ENCODE measurements at regions of chr19 and their contacts with region 1.

Region 1: GRCh38 chr19:5557691-5558090 is 10.1 kb downstream of the TINCR start:
- DNase-seq: peak; percentile 81
- H3K4me3 ChIP-seq: peak overlapping the region; percentile 3 to 32 (median 10)
- H3K27ac ChIP-seq: peak overlapping the region; percentile 84
- H3K4me1 ChIP-seq: peaks cover 17% of the 10 kb centered on the region
- H3K27me3 ChIP-seq: no peaks in the 10 kb centered on the region
- CTCF ChIP-seq: peak in 1 of 2 donors; percentile 31

Region 2: DNA sequence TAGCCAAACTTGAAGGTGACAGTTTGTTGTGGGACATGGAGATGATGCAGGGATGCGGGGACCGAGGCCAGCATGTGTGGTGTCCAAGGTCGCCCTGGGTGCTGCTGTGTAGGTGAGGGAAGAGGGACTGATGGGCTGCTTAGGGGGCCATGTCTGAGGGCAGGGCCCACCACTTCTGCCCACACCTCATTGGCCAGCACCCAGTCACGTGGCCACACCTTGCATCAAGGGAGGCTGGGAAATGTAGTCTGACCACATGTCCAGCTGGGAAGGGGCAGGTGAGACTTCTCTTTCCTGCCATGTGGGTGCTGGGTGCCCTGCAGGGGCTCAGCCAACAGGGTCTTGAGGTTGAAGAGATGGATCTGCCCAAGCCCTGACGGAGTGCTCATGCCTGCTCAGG is 499.8 kb before region 1 on chr19:
- CTCF ChIA-PET with region 1: no interaction called
- dilution Hi-C with region 1: loop called (anchors 10 kb)
- in situ Hi-C with region 1: no loop called
- intact Hi-C with region 1: no loop called
- DNase-seq: peak; percentile 12
- H3K4me3 ChIP-seq: no peak overlapping the region
- H3K27ac ChIP-seq: no peak overlapping the region
- H3K4me1 ChIP-seq: peaks cover 12% of the 10 kb centered on the region
- H3K27me3 ChIP-seq: no peaks in the 10 kb centered on the region
- CTCF ChIP-seq: no peak

Region 3: DNA sequence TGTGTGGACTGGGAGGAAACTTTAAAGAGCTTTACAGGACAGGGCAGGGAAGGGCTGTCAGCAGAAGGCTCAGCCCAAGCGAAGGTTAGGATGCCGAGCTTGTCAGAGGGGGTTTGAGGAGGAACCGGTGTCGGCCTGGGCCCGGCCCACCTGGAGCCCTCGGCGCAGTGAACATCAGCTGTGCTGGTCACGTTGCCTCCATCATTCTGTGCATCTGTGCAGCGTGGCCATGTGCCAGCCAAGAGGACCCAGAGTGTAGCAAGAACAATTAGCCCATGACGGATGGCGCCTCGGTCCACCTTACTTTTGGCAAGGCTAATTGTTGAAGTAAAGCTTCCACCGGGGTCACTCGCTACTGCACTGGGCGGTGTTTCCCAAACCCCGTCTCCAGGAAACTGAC is 378.4 kb before region 1 on chr19:
- CTCF ChIA-PET with region 1: no interaction called
- dilution Hi-C with region 1: loop called (anchors 5 kb)
- in situ Hi-C with region 1: no loop called
- intact Hi-C with region 1: no loop called
- DNase-seq: no peak
- H3K4me3 ChIP-seq: no peak overlapping the region
- H3K27ac ChIP-seq: no peak overlapping the region
- H3K4me1 ChIP-seq: no peaks in the 10 kb centered on the region
- H3K27me3 ChIP-seq: no peaks in the 10 kb centered on the region
- CTCF ChIP-seq: no peak

Region 4: DNA sequence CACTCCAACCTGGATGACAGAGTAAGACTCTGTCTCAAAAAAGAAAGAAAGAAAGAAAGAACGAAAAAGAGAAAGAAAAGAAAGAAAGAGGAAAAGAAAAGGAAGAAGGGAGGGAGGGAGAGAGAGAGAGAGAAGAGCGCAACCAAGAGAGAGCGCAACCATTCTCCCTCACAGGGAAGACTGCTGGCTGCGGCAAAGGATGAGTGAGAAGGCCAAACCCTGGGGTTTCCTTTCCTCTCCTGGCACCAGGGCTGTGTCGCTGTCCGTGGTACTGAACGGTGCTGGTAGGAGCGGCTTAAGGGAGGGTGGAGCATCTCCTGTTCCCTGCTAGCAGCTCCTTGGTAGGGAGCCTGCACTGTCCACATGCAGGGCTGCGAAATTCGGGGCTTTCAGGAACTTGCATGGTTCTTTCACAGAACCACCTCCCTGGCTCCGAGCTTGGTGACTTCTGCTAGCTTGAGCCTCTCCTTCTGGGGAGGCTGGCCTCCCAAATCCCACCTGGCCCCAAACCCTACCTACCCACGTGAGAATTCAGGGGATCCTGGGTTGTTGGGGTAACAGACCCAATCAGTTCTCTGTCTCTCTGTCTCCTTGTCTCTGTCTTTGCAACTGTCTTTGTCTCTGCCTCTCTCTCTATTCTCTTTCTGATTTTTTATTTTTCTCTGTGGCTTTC is 153.6 kb before region 1 on chr19:
- CTCF ChIA-PET with region 1: no interaction called
- dilution Hi-C with region 1: no loop called
- in situ Hi-C with region 1: no loop called
- intact Hi-C with region 1: no loop called
- DNase-seq: peak; percentile 80
- H3K4me3 ChIP-seq: no peak overlapping the region
- H3K27ac ChIP-seq: no peak overlapping the region
- H3K4me1 ChIP-seq: no peaks in the 10 kb centered on the region
- H3K27me3 ChIP-seq: no peaks in the 10 kb centered on the region
- CTCF ChIP-seq: no peak

Region 5: DNA sequence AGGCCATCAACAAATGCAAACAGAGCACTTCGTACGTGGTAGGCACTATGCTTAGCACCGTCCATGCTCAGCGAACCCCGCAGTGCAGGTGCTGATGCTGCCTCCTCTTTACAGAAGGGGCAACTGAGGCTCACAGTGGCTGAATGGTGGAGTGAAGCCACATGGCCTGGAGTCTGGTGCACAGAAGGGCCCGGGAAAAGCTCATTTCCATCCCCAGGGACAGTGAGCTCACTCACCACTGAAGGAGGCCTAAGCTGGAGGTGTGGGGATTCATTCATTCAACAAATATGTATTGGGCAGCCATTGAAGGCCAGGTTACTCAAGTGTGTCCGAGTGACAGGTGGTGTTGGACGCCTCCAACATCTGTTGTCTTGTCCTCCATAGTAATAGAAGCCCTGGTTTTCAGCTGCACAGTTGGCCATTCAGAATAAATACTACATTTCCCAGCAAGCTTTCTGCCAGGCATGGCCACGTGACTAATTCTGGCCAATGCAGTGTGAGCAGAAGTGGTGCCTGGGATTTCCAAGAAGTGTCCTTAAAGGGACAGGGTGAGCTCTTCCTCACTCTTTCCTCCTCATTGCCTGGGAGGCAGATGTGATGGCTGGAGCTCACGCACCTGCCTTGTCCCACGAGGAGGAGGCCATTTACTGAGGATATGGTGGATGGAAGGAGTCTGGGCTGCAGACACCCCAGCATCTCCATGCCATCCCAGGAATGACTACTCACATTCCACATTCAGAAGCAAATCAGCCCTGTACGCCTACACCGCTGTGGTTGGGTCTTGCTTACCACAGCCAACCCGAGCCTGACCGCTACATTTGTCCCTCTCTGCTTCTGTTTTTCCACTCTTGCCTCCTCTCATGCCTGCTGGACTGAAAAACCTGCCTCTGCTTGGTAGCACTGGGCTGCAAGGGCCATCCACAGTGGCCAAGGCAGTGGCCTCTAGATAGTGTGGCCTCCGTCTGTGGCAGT is 104.8 kb before region 1 on chr19:
- CTCF ChIA-PET with region 1: no interaction called
- dilution Hi-C with region 1: loop called (anchors 10 kb)
- in situ Hi-C with region 1: no loop called
- intact Hi-C with region 1: no loop called
- DNase-seq: no peak
- H3K4me3 ChIP-seq: no peak overlapping the region
- H3K27ac ChIP-seq: no peak overlapping the region
- H3K4me1 ChIP-seq: no peaks in the 10 kb centered on the region
- H3K27me3 ChIP-seq: peaks cover 5% of the 10 kb centered on the region
- CTCF ChIP-seq: no peak

Region 6: DNA sequence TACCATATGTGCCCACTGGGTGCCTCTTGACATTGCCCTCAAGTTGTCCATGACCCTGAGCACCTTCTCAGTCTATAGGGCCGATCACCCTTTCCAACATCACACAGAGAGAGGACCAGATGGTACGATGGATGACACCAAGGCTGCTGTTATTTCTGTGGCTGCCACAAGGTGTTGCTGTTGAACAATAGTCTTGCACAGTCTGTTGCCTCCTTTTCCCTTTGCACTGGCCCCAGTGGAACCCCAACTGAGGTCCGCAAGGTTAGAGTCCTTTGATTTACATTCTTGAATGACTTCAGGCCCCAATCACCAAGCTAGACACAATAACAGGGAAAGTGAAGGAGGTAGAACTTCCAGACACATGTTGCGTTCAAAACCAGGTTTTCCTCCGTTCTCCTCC is 42.0 kb before region 1 on chr19:
- CTCF ChIA-PET with region 1: no interaction called
- dilution Hi-C with region 1: no loop called
- in situ Hi-C with region 1: no loop called
- intact Hi-C with region 1: no loop called
- DNase-seq: no peak
- H3K4me3 ChIP-seq: no peak overlapping the region
- H3K27ac ChIP-seq: no peak overlapping the region
- H3K4me1 ChIP-seq: no peaks in the 10 kb centered on the region
- H3K27me3 ChIP-seq: no peaks in the 10 kb centered on the region
- CTCF ChIP-seq: peak in 1 of 2 donors; percentile 28

Region 7: GRCh38 chr19:5600797-5601196 is 43.1 kb after region 1 on chr19:
- CTCF ChIA-PET with region 1: no interaction called
- dilution Hi-C with region 1: loop called (anchors 5 kb)
- in situ Hi-C with region 1: no loop called
- intact Hi-C with region 1: no loop called
- DNase-seq: no peak
- H3K4me3 ChIP-seq: no peak overlapping the region
- H3K27ac ChIP-seq: no peak overlapping the region
- H3K4me1 ChIP-seq: no peaks in the 10 kb centered on the region
- H3K27me3 ChIP-seq: no peaks in the 10 kb centered on the region
- CTCF ChIP-seq: no peak